Caco-2 (cell line): ENCODE measurements at regions of chr11 and their contacts with region 1.

Region 1: DNA sequence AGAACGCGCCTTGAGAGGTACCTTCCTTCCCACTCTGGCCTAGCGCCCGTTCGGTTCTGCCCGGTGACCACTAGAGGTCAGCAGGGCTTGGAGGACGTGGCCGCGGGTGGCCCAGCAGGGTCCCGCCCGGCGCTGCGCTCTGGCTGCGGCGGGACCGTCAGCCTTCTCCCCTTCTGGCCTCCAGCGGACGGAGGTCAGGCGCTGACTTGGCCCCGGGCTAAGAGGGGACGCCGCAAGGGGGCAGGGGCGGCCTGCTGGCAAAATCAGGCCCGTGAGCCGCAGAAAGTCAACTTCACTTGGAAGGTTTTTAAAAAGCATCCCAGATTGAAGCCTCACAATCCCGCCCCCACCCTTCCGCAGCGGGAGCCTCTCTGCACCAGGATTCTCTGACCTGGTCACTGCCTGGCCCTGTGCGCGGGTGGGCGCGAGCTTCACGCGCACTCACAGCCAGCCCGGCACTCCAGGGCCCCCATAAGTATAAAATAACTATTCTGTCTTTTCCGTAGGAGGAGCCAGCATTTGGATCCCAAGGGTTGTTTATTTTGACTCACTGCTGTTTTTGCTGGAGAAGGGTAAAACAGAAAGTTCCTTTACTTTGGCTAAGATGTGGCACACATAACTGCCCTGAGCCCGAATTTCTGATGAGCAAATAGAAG is 23.2 kb upstream of the ZBTB16 start:
- DNase-seq: peak; percentile 93 to 98
- H3K4me3 ChIP-seq: peak overlapping the region; percentile 29
- H3K4me3 Mint-ChIP-seq: peak overlapping the region; percentile 57
- H3K27ac Mint-ChIP-seq: no peak overlapping the region
- H3K4me1 ChIP-seq: peaks cover 33% of the 10 kb centered on the region
- H3K4me1 Mint-ChIP-seq: peaks cover 23% of the 10 kb centered on the region
- H3K27me3 ChIP-seq: no peaks in the 10 kb centered on the region
- H3K27me3 Mint-ChIP-seq: no peaks in the 10 kb centered on the region
- CTCF ChIP-seq: peak; percentile 98 to 99

Region 2: GRCh38 chr11:113994077-113994954 is 42.0 kb before region 1 on chr11:
- CTCF ChIA-PET with region 1: interaction called, 6 read pairs
- POLR2A ChIA-PET with region 1: no interaction called
- intact Hi-C with region 1: loop called (anchors 2 kb)
- DNase-seq: peak in 1 of 2 experiments; percentile 69
- H3K4me3 ChIP-seq: no peak overlapping the region
- H3K4me3 Mint-ChIP-seq: no peak overlapping the region
- H3K27ac Mint-ChIP-seq: no peak overlapping the region
- H3K4me1 ChIP-seq: no peaks in the 10 kb centered on the region
- H3K4me1 Mint-ChIP-seq: no peaks in the 10 kb centered on the region
- H3K27me3 ChIP-seq: no peaks in the 10 kb centered on the region
- H3K27me3 Mint-ChIP-seq: peaks cover 18% of the 10 kb centered on the region
- CTCF ChIP-seq: peak; percentile 93 to 96

Region 3: DNA sequence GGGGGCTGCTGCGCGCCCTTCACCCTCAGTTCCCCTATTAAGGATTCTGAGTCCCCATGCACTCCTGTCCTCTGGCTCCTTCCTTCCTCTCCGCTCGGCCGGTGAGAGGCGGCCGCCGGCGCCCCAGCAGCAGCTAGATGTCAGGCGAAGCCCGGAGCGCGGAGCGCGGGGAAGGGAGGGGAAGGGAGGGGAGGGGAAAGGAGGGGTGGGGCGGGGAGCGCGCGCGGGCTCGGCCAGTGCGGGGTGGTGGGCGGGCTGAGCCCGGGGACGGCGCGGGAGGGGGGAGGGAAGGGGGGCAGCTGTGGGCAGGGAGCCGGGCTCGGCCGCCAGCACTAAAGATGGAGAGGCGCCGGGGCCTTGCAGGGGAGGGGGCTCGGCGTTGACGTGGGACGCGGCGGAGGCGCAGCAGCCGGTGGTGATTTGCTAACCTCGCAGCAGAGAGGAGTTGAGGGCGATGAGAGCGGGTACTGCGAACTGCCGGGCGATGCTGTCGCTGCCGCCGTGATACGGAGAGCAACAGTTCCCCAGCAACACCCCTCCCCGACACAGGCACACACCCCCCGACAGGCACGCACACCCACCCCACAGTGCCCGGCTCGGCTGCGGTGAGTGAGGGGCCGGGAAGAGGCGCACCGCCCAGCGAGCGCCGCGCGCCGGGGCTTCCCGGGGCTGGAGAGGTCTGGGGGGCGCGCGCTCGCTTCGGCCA is 23.1 kb after region 1 on chr11 and contains the start of gene ZBTB16:
- CTCF ChIA-PET with region 1: interaction called, 5 read pairs
- POLR2A ChIA-PET with region 1: no interaction called
- intact Hi-C with region 1: loop called (anchors 1 kb)
- DNase-seq: peak; percentile 83 to 88
- H3K4me3 ChIP-seq: peak within 1 kb of the TSS; percentile 78
- H3K4me3 Mint-ChIP-seq: peak within 1 kb of the TSS; percentile 86
- H3K27ac Mint-ChIP-seq: peak within 1 kb of the TSS; percentile 74
- H3K4me1 ChIP-seq: peaks cover 10% of the 10 kb centered on the region; the same call in 1 of the 2 replicates
- H3K4me1 Mint-ChIP-seq: peaks cover 16% of the 10 kb centered on the region
- H3K27me3 ChIP-seq: no peaks in the 10 kb centered on the region
- H3K27me3 Mint-ChIP-seq: peaks cover 11% of the 10 kb centered on the region
- CTCF ChIP-seq: peak in 1 of 2 experiments; percentile 78
- total RNA-seq, gene ZBTB16: 10.6 and 12.7 TPM in 2 replicates

Region 4: GRCh38 chr11:114115451-114115928 is 79.2 kb after region 1 on chr11:
- CTCF ChIA-PET with region 1: interaction called, 8 read pairs
- POLR2A ChIA-PET with region 1: no interaction called
- intact Hi-C with region 1: loop called (anchors 1 kb)
- DNase-seq: peak; percentile 90 to 91
- H3K4me3 ChIP-seq: no peak overlapping the region
- H3K4me3 Mint-ChIP-seq: peak overlapping the region; percentile 12
- H3K27ac Mint-ChIP-seq: peak overlapping the region; percentile 83
- H3K4me1 ChIP-seq: peaks cover 63% of the 10 kb centered on the region
- H3K4me1 Mint-ChIP-seq: peaks cover 47% of the 10 kb centered on the region
- H3K27me3 ChIP-seq: no peaks in the 10 kb centered on the region
- H3K27me3 Mint-ChIP-seq: no peaks in the 10 kb centered on the region
- CTCF ChIP-seq: peak in 1 of 2 experiments; percentile 73

Region 5: GRCh38 chr11:114180301-114181055 is 144.2 kb after region 1 on chr11:
- CTCF ChIA-PET with region 1: interaction called, 7 read pairs
- POLR2A ChIA-PET with region 1: no interaction called
- intact Hi-C with region 1: loop called (anchors 1 kb)
- DNase-seq: peak; percentile 64 to 73
- H3K4me3 ChIP-seq: no peak overlapping the region
- H3K4me3 Mint-ChIP-seq: no peak overlapping the region
- H3K27ac Mint-ChIP-seq: no peak overlapping the region
- H3K4me1 ChIP-seq: peaks cover 22% of the 10 kb centered on the region
- H3K4me1 Mint-ChIP-seq: peaks cover 25% of the 10 kb centered on the region
- H3K27me3 ChIP-seq: no peaks in the 10 kb centered on the region
- H3K27me3 Mint-ChIP-seq: no peaks in the 10 kb centered on the region
- CTCF ChIP-seq: peak; percentile 80 to 91

Region 6: GRCh38 chr11:114209904-114210303 is 173.6 kb after region 1 on chr11:
- CTCF ChIA-PET with region 1: interaction called, 3 read pairs
- POLR2A ChIA-PET with region 1: no interaction called
- intact Hi-C with region 1: loop called (anchors 1 kb)
- DNase-seq: peak; percentile 90 to 93
- H3K4me3 ChIP-seq: 0 out of 2 replicates have a peak overlapping the region, but pooled peaks have one; percentile 9
- H3K4me3 Mint-ChIP-seq: peak overlapping the region; percentile 68
- H3K27ac Mint-ChIP-seq: peak overlapping the region; percentile 71
- H3K4me1 ChIP-seq: peaks cover 53% of the 10 kb centered on the region
- H3K4me1 Mint-ChIP-seq: peaks cover 34% of the 10 kb centered on the region
- H3K27me3 ChIP-seq: no peaks in the 10 kb centered on the region
- H3K27me3 Mint-ChIP-seq: no peaks in the 10 kb centered on the region
- CTCF ChIP-seq: no peak